ENCODE measurements at regions of chr11 and their contacts with region 1.

Region 1: DNA sequence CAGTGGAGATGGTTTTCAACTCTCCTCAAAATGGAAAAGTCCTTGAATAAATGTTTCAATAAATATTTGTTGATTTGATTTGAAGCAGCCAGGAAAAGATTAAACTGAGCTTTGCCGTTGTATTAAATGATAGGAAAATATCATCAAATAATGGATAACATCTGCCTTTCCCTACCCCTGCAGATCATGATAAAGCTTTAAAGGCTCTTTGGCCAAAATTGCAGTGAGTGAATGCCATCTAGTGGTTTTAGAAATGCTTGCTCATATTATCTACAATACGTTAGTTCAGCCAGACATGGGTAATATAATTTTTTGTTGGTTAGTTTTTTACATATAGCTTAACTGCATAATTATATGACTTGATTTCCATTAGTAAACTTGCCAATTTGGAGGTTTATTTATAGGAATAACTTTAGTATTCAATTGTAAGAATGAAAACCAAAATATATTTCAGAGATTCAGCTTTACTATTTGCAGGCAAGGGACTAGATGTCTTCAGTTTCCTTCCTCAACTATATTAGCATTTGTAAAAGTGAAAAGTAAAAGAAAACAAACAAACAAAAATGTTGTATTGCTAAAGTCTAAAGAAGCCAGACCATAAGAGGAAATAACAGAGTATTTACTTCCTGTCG is 159.2 kb downstream of the MSANTD4 start:
- DNase-seq: peak; percentile 47
- H3K4me3 ChIP-seq: no peak overlapping the region
- H3K27ac ChIP-seq: no peak overlapping the region
- H3K4me1 ChIP-seq: no peaks in the 10 kb centered on the region
- CTCF ChIP-seq: peak; percentile 79

Region 2: DNA sequence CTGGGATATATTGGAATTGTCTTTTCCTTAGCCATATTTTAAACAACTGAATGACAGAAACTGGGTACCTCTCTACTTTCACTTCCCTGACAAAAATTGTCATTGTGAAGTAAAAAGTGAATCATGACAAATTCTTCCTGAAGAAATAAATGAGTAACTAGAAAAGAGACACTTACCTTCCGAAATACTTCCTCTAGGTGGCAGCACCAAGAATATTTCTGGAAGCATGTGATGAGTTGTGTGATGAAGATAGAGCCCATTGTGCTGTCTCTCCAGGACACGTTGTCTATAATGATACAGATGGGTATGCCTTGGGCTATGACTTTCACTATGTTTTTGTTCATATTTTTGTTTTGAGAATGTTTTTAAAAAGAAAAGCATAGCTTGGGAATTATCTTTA is 915.9 kb before region 1 on chr11:
- CTCF ChIA-PET with region 1: no interaction called
- POLR2A ChIA-PET with region 1: no interaction called
- intact Hi-C with region 1: loop called (anchors 10 kb)
- DNase-seq: peak; percentile 37
- H3K4me3 ChIP-seq: no peak overlapping the region
- H3K27ac ChIP-seq: no peak overlapping the region
- H3K4me1 ChIP-seq: no peaks in the 10 kb centered on the region
- CTCF ChIP-seq: peak; percentile 79

Region 3: DNA sequence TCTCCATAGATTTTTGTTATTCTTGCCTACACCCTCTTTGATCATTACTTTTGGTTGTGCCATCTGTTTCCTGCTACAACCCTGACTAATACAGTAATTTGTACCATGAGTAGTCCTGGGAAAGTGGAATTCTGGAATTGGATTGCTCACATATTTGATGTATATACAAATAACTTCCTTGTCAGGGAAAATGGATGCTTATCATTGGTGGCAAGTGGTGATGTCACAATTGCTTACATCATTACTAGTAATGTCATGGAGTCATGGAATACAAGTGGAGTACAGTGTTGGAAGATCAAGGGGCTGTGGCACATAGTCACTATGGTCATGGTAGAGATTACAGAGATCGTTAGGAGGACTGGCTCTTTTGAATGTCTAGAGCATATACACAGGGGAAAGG is 239.0 kb after region 1 on chr11:
- CTCF ChIA-PET with region 1: no interaction called
- POLR2A ChIA-PET with region 1: no interaction called
- intact Hi-C with region 1: no loop called
- DNase-seq: no peak
- H3K4me3 ChIP-seq: no peak overlapping the region
- H3K27ac ChIP-seq: no peak overlapping the region
- H3K4me1 ChIP-seq: no peaks in the 10 kb centered on the region
- CTCF ChIP-seq: no peak